Endothelial cell of umbilical vein (primary cell): ENCODE measurements at regions of chr20 and their contacts with region 1.

Region 1: GRCh38 chr20:25390538-25391528 is at the start of gene ABHD12:
- DNase-seq: peak; percentile 96
- H3K4me3 ChIP-seq: peak within 1 kb of the TSS; percentile 79 to 81 (median 80)
- H3K27ac ChIP-seq: peak within 1 kb of the TSS; percentile 76
- H3K4me1 ChIP-seq: peaks cover 9% of the 10 kb centered on the region
- H3K27me3 ChIP-seq: peaks cover 0 to 1% of the 10 kb centered on the region in 2 experiments
- CTCF ChIP-seq: no peak
- POLR2A ChIP-seq: peak; percentile 93
- total RNA-seq, gene ABHD12: 36.0 and 39.6 TPM in 2 replicates

Region 2: DNA sequence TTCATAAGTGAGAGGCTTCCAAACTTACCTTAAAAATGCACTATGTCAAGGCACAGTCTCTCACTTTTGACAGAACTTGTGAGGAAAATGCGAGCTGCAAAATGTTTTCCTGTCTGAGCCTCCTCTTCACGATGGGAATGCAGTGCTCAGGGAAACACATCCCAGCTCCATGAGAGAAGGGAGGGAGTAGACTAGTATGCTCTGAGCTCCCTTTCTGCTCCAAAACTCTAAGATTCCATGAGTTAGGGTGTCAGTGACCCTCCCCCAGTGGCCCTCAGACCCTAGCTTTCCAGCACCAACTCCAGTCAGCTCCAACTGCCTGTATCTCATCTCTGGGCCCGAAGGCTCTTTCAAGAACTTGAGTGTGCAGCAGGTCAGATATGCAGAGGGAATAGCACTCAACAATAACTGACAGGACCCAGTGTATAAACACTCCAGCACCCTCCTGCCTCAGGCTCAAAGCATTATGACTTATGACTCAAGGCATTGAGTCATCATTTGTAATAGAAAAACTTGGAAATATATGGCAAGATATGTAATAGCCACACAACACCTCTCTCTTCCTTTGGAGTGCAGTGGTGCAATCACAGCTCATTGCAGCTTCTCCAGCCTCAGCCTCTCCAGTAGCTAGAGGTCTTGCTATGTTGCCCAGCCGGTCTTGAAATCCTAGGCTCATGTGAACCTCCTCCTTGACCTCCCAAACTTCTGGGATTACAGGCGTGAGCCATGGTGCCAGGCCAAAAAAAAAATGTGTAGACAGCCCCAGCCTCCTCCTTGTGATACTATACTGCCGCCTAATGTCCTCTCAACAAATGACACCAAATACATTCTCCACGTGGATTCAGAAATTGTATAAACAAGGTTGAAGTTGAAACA is 212.0 kb before region 1 on chr20:
- CTCF ChIA-PET with region 1: no interaction called
- POLR2A ChIA-PET with region 1: no interaction called
- dilution Hi-C with region 1: no loop called
- intact Hi-C with region 1: no loop called
- DNase-seq: peak; percentile 65
- H3K4me3 ChIP-seq: no peak overlapping the region
- H3K27ac ChIP-seq: no peak overlapping the region
- H3K4me1 ChIP-seq: peaks cover 2% of the 10 kb centered on the region
- H3K27me3 ChIP-seq: peaks cover 0 to 2% of the 10 kb centered on the region in 2 experiments
- CTCF ChIP-seq: peak; percentile 46 to 55
- POLR2A ChIP-seq: no peak

Region 3: DNA sequence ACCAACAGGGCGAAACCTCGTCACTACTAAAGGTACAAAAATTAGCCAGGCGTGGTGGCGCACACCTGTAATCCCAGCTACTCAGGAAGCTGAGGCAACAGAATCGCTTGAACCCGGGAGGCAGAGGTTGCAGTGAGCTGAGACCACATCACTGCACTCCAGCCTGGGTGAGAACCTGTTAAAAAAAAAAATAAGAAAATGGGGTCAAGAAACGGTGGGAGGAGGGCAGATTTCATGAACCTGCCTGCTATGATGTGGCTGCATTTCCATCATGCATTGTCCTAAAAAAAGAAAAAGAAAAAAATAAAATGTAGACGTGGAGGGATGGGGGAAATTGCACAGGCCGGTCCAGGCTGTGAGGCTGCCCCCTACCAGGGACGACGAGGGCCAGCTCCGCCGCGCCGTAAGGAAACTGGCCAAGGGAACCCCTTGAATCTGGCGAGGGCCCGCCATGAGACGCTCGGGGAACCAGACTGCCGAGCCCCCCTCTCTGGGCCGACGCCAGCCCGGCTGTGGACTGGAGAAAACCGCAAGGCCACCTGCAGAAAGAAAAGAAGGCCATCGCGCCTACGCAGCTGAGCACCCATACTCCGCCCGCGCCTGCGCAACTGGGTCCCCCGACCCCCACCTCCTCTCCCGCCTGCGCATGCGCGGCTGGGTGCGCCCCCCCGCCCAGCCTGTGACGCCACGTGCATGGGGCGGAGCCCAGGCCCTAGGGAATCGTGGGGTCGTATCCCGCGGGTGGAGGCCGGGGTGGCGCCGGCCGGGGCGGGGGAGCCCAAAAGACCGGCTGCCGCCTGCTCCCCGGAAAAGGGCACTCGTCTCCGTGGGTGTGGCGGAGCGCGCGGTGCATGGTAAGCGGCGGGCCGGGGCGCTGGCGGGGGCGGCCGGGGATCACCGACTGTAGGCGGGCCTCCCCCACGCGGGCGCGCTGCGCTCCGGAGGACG is 195.5 kb before region 1 on chr20 and contains the start of gene ENTPD6:
- CTCF ChIA-PET with region 1: no interaction called
- POLR2A ChIA-PET with region 1: no interaction called
- dilution Hi-C with region 1: no loop called
- intact Hi-C with region 1: loop called (anchors 1 kb)
- DNase-seq: peak; percentile 91
- H3K4me3 ChIP-seq: peak within 1 kb of the TSS; percentile 60 to 89 (median 79)
- H3K27ac ChIP-seq: peak within 1 kb of the TSS; percentile 46
- H3K4me1 ChIP-seq: peaks cover 5% of the 10 kb centered on the region
- H3K27me3 ChIP-seq: peaks cover 6 to 13% of the 10 kb centered on the region in 2 experiments
- CTCF ChIP-seq: peak in 1 of 2 donors; percentile 30
- POLR2A ChIP-seq: peak; percentile 89
- total RNA-seq, gene ENTPD6: 51.2 and 52.2 TPM in 2 replicates

Region 4: DNA sequence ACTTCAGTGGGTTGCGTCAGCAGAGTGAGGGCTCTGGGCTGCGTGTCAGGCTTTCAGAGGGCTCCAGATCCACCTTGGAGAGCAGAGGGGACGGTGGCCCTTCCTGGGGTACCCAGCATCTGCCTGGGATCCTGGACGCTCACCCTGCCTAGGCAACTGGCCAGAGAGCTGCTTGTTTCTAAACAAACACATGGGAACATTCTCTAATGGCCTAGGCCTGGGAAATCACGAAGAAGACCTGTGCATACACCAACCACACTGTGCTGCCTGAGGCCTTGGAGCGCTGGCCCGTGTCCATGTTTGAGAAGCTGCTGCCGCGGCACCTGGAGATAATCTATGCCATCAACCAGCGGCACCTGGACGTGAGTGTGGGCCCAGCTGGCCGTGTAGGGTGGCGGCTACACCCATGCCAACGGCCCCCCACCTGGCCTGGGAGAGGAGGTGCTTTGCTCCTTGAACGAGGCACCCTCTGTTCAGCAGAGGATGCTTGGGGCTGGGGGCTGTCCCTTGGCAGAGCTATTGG is 110.7 kb before region 1 on chr20:
- CTCF ChIA-PET with region 1: no interaction called
- POLR2A ChIA-PET with region 1: no interaction called
- dilution Hi-C with region 1: no loop called
- intact Hi-C with region 1: no loop called
- DNase-seq: no peak
- H3K4me3 ChIP-seq: no peak overlapping the region
- H3K27ac ChIP-seq: no peak overlapping the region
- H3K4me1 ChIP-seq: no peaks in the 10 kb centered on the region
- H3K27me3 ChIP-seq: no peaks in the 10 kb centered on the region
- CTCF ChIP-seq: no peak
- POLR2A ChIP-seq: no peak

Region 5: DNA sequence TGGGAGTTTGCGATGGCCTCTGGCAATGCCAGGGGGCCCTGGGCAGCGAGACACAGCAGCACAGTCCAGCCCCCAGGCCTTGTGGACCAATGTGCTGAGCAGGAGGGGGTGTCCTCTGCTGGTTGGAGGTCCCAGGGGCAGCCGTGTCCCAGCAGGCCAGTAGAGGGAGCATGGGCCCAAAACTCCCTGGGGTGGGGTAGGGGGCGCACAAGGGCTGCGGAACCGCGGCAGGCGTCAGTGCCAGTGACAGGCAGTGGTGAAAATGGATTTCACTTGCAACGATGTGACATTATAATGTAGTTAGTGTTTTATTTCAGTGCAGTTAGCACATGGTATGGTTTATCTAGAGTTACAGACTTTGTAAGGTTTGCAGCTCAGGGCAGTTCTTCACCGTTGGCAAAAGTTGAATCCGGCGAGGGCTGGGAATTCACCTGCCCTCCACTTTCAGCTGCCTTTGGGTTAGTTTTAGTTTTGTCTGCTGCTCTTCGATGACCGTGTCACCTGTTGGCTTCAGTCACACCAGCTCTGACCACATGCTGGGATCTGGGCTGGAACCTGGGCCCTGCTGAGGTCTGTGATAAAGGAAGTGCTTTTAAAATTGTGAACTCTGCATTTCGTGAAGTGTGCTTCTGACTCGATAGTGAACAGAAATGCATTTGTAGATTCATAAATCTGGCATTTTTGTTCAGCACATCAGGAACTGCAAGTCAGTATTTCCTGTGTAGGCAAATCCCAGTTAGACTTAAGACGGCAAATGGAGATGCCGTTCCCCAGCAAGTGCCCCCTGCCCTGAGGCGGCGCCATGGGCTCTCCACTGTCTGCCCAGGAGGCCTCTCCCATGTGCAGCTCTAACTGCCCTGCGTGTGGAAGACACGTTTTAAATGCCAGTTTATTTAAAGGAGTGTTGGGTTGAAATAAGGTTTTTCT is 96.1 kb before region 1 on chr20:
- CTCF ChIA-PET with region 1: interaction called, 3 read pairs
- POLR2A ChIA-PET with region 1: no interaction called
- dilution Hi-C with region 1: no loop called
- intact Hi-C with region 1: loop called (anchors 2 kb)
- DNase-seq: peak; percentile 71
- H3K4me3 ChIP-seq: no peak overlapping the region
- H3K27ac ChIP-seq: no peak overlapping the region
- H3K4me1 ChIP-seq: no peaks in the 10 kb centered on the region
- H3K27me3 ChIP-seq: no peaks in the 10 kb centered on the region
- CTCF ChIP-seq: peak; percentile 93 to 98
- POLR2A ChIP-seq: no peak

Region 6: GRCh38 chr20:25407311-25408169 is 16.7 kb after region 1 on chr20 and contains the start of gene GINS1:
- CTCF ChIA-PET with region 1: interaction called, 4 read pairs
- POLR2A ChIA-PET with region 1: interaction called, 4 read pairs
- dilution Hi-C with region 1: no loop called
- intact Hi-C with region 1: loop called (anchors 1 kb)
- DNase-seq: peak; percentile 90
- H3K4me3 ChIP-seq: peak within 1 kb of the TSS; percentile 54 to 96 (median 80)
- H3K27ac ChIP-seq: peak within 1 kb of the TSS; percentile 74
- H3K4me1 ChIP-seq: peaks cover 9% of the 10 kb centered on the region
- H3K27me3 ChIP-seq: no peaks in the 10 kb centered on the region
- CTCF ChIP-seq: no peak
- POLR2A ChIP-seq: peak; percentile 85
- total RNA-seq, gene GINS1: 19.4 and 26.3 TPM in 2 replicates

Region 7: GRCh38 chr20:25696384-25697131 is 305.7 kb after region 1 on chr20 and contains the start of gene ZNF337:
- CTCF ChIA-PET with region 1: no interaction called
- POLR2A ChIA-PET with region 1: no interaction called
- dilution Hi-C with region 1: no loop called
- intact Hi-C with region 1: loop called (anchors 10 kb)
- DNase-seq: peak; percentile 96
- H3K4me3 ChIP-seq: peak within 1 kb of the TSS; percentile 83 to 89 (median 84)
- H3K27ac ChIP-seq: peak within 1 kb of the TSS; percentile 64
- H3K4me1 ChIP-seq: peaks cover 5% of the 10 kb centered on the region
- H3K27me3 ChIP-seq: no peaks in the 10 kb centered on the region
- CTCF ChIP-seq: peak in 1 of 2 donors; percentile 4
- POLR2A ChIP-seq: peak; percentile 85
- total RNA-seq, gene ZNF337: 12.9 and 16.7 TPM in 2 replicates